HEK293 (cell line): ENCODE measurements at regions of chr10 and their contacts with region 1.

Region 1: DNA sequence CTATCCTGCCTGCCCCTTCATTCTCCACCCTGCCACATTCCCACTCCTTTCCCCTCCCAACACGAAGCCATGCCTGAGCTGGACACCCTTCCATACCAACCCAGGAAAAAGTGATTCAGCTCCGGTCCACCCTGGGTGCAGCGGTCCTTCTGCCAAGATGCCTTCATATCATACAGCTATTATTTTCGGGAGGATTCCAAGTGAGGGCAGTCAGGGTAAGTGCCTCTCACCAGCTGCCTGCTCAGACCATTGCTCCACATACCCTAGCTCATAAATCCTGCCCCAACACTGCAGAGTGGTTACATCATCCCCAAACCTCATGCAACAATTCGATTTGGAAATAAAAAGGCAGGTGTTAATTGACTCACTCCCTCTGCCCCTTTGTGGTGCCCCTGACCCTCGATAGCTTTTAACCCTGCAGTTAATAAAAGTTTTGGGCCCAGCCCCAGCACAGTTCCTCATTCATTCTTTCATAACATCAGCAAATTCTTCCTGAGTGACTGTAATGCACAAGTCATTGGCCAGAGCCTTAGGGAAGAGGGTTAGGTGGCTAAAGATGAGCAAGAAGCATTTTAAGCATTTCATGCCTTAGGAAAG is 42.6 kb downstream of the ZNF503 start:
- H3K4me3 ChIP-seq: no peak overlapping the region
- H3K27ac ChIP-seq: peak overlapping the region; percentile 76
- H3K4me1 ChIP-seq: peaks cover 16% of the 10 kb centered on the region
- CTCF ChIP-seq: no peak

Region 2: GRCh38 chr10:75294866-75295701 is 63.8 kb before region 1 on chr10:
- CTCF ChIA-PET with region 1: interaction called, 4 read pairs
- POLR2A ChIA-PET with region 1: interaction called, 11 read pairs
- H3K4me3 ChIP-seq: peak overlapping the region; percentile 44
- H3K27ac ChIP-seq: peak overlapping the region; percentile 84
- H3K4me1 ChIP-seq: peaks cover 12% of the 10 kb centered on the region
- CTCF ChIP-seq: peak; percentile 52

Region 3: DNA sequence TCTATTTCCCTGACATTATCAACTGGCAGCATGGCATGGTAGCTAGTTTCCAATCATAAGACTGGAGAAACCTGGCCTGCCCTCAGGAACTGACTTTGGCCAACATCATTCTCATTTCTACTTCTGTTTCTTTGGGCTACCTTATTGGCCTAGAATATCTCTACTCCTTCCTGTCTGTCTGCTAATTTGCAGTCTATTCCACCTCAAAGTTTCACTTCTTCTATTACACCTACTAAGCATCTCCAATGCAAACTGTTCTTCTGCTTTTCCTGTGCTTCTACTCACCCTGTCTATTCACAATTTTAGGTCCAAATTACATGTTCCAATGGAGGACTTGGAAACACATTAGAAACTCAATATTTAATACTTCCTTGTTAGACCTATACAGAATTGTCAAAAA is 22.9 kb before region 1 on chr10:
- CTCF ChIA-PET with region 1: no interaction called
- POLR2A ChIA-PET with region 1: no interaction called
- H3K4me3 ChIP-seq: no peak overlapping the region
- H3K27ac ChIP-seq: no peak overlapping the region
- H3K4me1 ChIP-seq: no peaks in the 10 kb centered on the region
- CTCF ChIP-seq: no peak

Region 4: DNA sequence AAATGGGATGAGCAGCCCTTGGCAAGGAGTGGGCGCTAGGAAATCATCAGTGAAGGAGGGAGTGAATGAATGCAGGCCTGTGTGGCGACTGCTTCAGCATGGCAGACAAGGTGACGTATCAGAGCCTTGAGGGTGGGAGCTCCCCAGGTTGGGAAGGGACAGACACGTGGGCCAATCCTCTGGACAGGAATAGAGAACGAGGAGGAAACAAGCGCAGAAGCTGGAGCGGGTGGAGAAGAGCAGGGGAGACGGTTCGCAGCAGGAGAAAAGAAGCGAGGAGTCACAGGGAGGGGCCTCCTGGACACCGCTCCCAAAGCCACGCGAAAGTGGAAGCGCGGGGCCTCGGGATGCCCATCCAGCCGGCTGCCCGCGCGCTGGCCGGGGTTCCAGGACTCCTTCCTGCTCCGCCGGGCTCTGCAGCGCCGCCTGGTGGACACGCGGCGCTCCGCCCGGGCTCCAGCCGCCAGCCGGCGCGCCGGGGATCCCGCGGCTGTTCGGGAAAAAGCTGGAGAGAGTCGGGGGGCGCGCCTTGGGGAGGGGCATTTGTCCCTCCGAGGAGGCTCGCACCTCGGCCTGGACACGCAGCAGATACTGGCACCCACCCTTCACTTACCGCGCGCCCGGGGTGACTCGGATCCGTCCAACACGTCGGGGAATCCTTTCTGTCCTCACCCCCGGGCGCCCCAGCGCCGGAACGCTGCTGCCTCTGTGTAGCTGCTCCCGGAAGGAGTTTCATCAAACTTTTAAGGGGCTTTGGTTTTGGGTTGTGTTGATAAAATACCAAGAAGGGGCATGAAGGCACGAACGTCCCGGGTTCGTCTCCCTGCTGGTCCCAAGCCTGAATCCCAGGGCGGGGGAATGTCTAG is 36.4 kb after region 1 on chr10:
- CTCF ChIA-PET with region 1: interaction called, 13 read pairs
- POLR2A ChIA-PET with region 1: interaction called, 3 read pairs
- H3K4me3 ChIP-seq: peak overlapping the region; percentile 9; the same call in 1 of the 2 replicates
- H3K27ac ChIP-seq: peak overlapping the region; percentile 68
- H3K4me1 ChIP-seq: no peaks in the 10 kb centered on the region; the same call in 1 of the 2 replicates
- CTCF ChIP-seq: no peak

Region 5: GRCh38 chr10:75434291-75434690 is 75.4 kb after region 1 on chr10:
- CTCF ChIA-PET with region 1: no interaction called
- POLR2A ChIA-PET with region 1: no interaction called
- H3K4me3 ChIP-seq: no peak overlapping the region
- H3K27ac ChIP-seq: no peak overlapping the region
- H3K4me1 ChIP-seq: peaks cover 16% of the 10 kb centered on the region; the same call in 1 of the 2 replicates
- CTCF ChIP-seq: no peak